ENCODE measurements at regions of chr3 and their contacts with region 1.

Region 1: DNA sequence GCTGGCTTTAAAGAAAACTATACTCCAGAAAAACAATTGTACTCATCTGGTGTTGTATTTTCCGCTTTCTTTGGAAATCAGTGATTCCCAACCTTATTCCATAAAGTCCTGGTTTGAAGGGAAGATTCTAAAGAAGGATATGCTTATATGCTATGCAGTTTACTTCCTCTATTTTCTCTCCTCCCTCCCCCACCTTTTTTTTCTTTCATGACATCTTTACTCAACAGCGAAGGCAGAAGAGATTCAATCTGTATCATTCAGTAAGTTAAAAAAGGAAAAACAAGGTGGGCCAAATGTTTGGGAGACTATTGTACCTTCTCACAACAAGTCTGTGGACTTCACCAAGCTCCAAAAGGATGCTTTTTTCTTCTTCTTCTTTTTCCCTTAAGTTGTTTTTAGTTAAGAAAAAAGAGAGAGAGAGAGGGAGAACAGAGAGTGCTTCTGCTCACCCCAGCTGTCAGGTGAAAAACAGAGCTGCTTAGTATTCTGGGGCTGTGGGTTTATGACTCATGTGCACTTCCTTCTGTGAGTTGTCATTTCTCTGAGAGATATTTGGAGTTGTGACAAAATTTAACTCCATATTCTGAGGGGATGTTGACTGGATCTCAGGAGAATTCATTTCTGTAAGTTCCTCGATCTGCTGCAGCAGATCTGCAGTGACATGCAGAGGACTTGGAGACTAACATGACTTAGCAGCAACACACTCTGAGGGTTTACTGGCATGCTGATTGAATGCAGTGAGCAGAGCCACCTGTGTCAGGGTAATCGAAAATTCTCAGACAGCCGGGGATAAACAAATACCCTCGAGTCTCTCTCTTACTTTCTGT is 70.7 kb downstream of the SSR3 start:
- DNase-seq: peak; percentile 10 to 86 (median 36)
- ATAC-seq: peak; percentile 84
- H3K4me3 ChIP-seq: peak overlapping the region; percentile 31
- H3K4me3 Mint-ChIP-seq: peak overlapping the region; percentile 20
- H3K27ac ChIP-seq: peak overlapping the region; percentile 66 to 75
- H3K27ac Mint-ChIP-seq: peak overlapping the region; percentile 80
- H3K4me1 ChIP-seq: peaks cover 16% of the 10 kb centered on the region
- H3K4me1 Mint-ChIP-seq: peaks cover 40% of the 10 kb centered on the region
- H3K27me3 ChIP-seq: no peaks in the 10 kb centered on the region
- H3K27me3 Mint-ChIP-seq: no peaks in the 10 kb centered on the region
- CTCF ChIP-seq: no peak

Region 2: GRCh38 chr3:156334841-156335564 is 149.2 kb before region 1 on chr3:
- CTCF ChIA-PET with region 1: no interaction called
- POLR2A ChIA-PET with region 1: no interaction called
- intact Hi-C with region 1: no loop called
- DNase-seq: no peak
- ATAC-seq: no peak
- H3K4me3 ChIP-seq: no peak overlapping the region
- H3K4me3 Mint-ChIP-seq: no peak overlapping the region
- H3K27ac ChIP-seq: no peak overlapping the region
- H3K27ac Mint-ChIP-seq: no peak overlapping the region
- H3K4me1 ChIP-seq: no peaks in the 10 kb centered on the region
- H3K4me1 Mint-ChIP-seq: no peaks in the 10 kb centered on the region
- H3K27me3 ChIP-seq: peaks cover 0 to 4% of the 10 kb centered on the region in 2 experiments
- H3K27me3 Mint-ChIP-seq: peaks cover 11% of the 10 kb centered on the region
- CTCF ChIP-seq: no peak

Region 3: GRCh38 chr3:156519758-156520162 is 35.6 kb after region 1 on chr3:
- CTCF ChIA-PET with region 1: interaction called, 3 read pairs
- POLR2A ChIA-PET with region 1: interaction called, 12 read pairs
- intact Hi-C with region 1: loop called in 1 of 2 experiments (anchors 2 kb)
- DNase-seq: no peak
- ATAC-seq: no peak
- H3K4me3 ChIP-seq: no peak overlapping the region
- H3K4me3 Mint-ChIP-seq: no peak overlapping the region
- H3K27ac ChIP-seq: no peak overlapping the region
- H3K27ac Mint-ChIP-seq: no peak overlapping the region
- H3K4me1 ChIP-seq: peaks cover 6% of the 10 kb centered on the region
- H3K4me1 Mint-ChIP-seq: peaks cover 11% of the 10 kb centered on the region
- H3K27me3 ChIP-seq: peaks cover 0 to 7% of the 10 kb centered on the region in 2 experiments
- H3K27me3 Mint-ChIP-seq: peaks cover 57% of the 10 kb centered on the region
- CTCF ChIP-seq: no peak

Region 4: DNA sequence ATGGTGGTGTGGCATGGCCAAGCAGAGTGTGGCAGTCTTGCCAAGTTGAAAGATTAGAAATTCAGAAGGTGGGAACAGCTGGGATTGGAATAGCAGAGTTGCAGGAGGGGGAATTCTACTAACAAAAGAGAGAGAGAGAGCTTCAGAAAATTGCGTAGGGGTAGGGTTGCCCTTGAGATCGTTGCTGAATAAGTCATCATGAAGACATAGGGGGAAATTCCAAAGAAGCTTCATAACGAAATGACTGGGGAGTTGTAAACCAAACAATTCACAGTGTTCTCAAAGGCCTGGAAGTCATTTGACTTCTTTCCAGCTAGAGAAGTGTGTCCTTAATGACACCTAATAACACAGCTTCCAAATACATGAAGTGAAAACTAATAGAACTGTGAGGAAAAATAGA is 163.9 kb after region 1 on chr3:
- CTCF ChIA-PET with region 1: no interaction called
- POLR2A ChIA-PET with region 1: no interaction called
- intact Hi-C with region 1: no loop called
- DNase-seq: no peak
- ATAC-seq: no peak
- H3K4me3 ChIP-seq: no peak overlapping the region
- H3K4me3 Mint-ChIP-seq: no peak overlapping the region
- H3K27ac ChIP-seq: no peak overlapping the region
- H3K27ac Mint-ChIP-seq: no peak overlapping the region
- H3K4me1 ChIP-seq: peaks cover 11% of the 10 kb centered on the region
- H3K4me1 Mint-ChIP-seq: peaks cover 12% of the 10 kb centered on the region
- H3K27me3 ChIP-seq: no peaks in the 10 kb centered on the region
- H3K27me3 Mint-ChIP-seq: peaks cover 4% of the 10 kb centered on the region
- CTCF ChIP-seq: no peak

Region 5: DNA sequence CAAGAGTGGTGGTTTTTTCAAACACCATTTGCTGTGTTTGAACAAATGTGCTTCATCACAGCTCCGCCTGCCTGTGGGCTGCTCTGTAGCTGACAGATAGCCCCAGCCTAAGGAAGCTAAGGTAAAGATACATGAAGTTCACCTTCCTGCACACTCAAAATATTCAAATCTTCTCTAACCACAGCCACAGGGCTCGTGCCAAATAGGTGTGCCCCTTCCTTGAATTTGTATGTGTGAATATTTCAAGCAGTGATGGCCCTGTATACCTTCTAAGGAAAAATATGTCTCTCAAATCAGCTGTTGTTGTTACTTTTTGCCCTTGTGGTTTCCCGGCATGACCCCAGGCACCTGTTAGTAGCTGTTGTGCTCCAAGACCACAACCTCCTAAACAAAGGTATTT is 582.9 kb after region 1 on chr3:
- CTCF ChIA-PET with region 1: no interaction called
- POLR2A ChIA-PET with region 1: no interaction called
- intact Hi-C with region 1: loop called in 1 of 2 experiments (anchors 5 kb)
- DNase-seq: peak in 11 of 14 experiments; percentile 3 to 84 (median 26)
- ATAC-seq: peak; percentile 88
- H3K4me3 ChIP-seq: no peak overlapping the region
- H3K4me3 Mint-ChIP-seq: peak overlapping the region; percentile 54
- H3K27ac ChIP-seq: no peak overlapping the region
- H3K27ac Mint-ChIP-seq: peak overlapping the region; percentile 57
- H3K4me1 ChIP-seq: peaks cover 34% of the 10 kb centered on the region
- H3K4me1 Mint-ChIP-seq: peaks cover 32% of the 10 kb centered on the region
- H3K27me3 ChIP-seq: no peaks in the 10 kb centered on the region
- H3K27me3 Mint-ChIP-seq: peaks cover 8% of the 10 kb centered on the region
- CTCF ChIP-seq: no peak